GM12878 (cell line): ENCODE measurements at regions of chr10 and their contacts with region 1.

Region 1: GRCh38 chr10:71766702-71767419 is 6.5 kb downstream of the VSIR start:
- DNase-seq: no peak
- ATAC-seq: peak; percentile 12
- H3K4me3 ChIP-seq: no peak overlapping the region
- H3K27ac ChIP-seq: no peak overlapping the region
- H3K4me1 ChIP-seq: peaks cover 32% of the 10 kb centered on the region
- H3K27me3 ChIP-seq: no peaks in the 10 kb centered on the region
- CTCF ChIP-seq: no peak
- EP300 ChIP-seq: no peak
- POLR2A ChIP-seq: no peak
- RAD21 ChIP-seq: no peak

Region 2: DNA sequence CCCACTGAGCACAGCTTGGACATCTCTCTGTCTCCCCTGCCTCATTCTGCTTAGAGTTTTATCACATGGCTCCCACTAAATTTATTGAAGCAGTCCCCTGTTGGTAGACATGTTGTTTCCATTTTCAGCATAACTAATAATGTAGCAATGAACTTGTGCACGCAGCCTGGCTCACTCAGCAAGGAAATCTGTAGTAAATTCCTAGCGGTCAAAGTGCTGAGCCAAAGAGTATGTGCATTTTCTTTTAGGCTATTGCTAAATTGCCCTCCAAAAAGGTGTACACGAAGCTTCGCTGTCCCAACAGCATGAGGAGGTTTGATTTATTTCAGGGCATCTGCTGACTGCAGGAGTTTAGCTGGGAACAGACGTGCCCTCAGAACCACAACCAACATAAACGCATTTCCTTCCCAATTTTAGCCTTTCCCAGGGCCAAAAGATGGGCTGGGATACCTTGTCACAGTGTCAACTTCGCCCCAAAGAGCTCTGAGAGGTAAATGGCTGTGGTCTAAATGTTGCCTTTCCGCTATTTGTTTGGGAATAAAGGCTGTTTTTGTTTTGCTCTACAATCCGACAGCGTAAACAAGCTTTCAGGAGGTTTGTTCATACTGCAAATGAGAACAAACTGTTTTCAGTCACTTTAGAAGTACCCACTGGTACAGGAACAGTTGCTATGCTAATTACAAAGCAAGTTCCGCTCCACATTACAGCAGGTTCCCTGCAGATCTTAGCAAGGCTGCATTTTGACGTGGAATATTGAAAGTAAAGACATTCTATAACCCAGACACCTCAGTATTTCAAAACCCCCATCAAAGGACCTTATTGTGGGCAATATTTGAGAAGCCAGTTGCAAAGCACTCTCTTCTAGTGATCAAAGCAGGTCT is 10.3 kb before region 1 on chr10:
- CTCF ChIA-PET with region 1: interaction called, 11 read pairs
- POLR2A ChIA-PET with region 1: interaction called, 6 read pairs
- RAD21 ChIA-PET with region 1: interaction called, 5 read pairs
- SMC1A ChIA-PET with region 1: interaction called, 21 read pairs
- in situ Hi-C with region 1: no loop called
- intact Hi-C with region 1: no loop called
- DNase-seq: no peak
- ATAC-seq: peak; percentile 16; the same call in 2 of the 3 replicates
- H3K4me3 ChIP-seq: no peak overlapping the region
- H3K27ac ChIP-seq: no peak overlapping the region
- H3K4me1 ChIP-seq: peaks cover 30% of the 10 kb centered on the region
- H3K27me3 ChIP-seq: no peaks in the 10 kb centered on the region; a peak in 1 of 4 replicates
- CTCF ChIP-seq: no peak
- EP300 ChIP-seq: no peak
- POLR2A ChIP-seq: no peak
- RAD21 ChIP-seq: no peak

Region 3: GRCh38 chr10:72981882-72982529 is 1215.1 kb after region 1 on chr10:
- CTCF ChIA-PET with region 1: no interaction called
- POLR2A ChIA-PET with region 1: no interaction called
- RAD21 ChIA-PET with region 1: no interaction called
- SMC1A ChIA-PET with region 1: no interaction called
- in situ Hi-C with region 1: no loop called
- intact Hi-C with region 1: no loop called
- DNase-seq: no peak
- ATAC-seq: peak; percentile 41
- H3K4me3 ChIP-seq: no peak overlapping the region
- H3K27ac ChIP-seq: no peak overlapping the region
- H3K4me1 ChIP-seq: no peaks in the 10 kb centered on the region
- H3K27me3 ChIP-seq: no peaks in the 10 kb centered on the region
- CTCF ChIP-seq: no peak
- EP300 ChIP-seq: no peak
- POLR2A ChIP-seq: no peak
- RAD21 ChIP-seq: no peak